AG04450 (cell line): ENCODE measurements at regions of chr15 and their contacts with region 1.

Region 1: GRCh38 chr15:69058830-69059556 is 44.5 kb downstream of the NOX5 start:
- DNase-seq: peak; percentile 73
- H3K4me3 ChIP-seq: no peak overlapping the region
- H3K27ac ChIP-seq: no peak overlapping the region
- H3K27me3 ChIP-seq: peaks cover 18% of the 10 kb centered on the region
- CTCF ChIP-seq: peak; percentile 82

Region 2: GRCh38 chr15:69225355-69226025 is 166.5 kb after region 1 on chr15:
- CTCF ChIA-PET with region 1: interaction called, 70 read pairs
- POLR2A ChIA-PET with region 1: no interaction called
- DNase-seq: no peak
- H3K4me3 ChIP-seq: no peak overlapping the region
- H3K27ac ChIP-seq: no peak overlapping the region
- H3K27me3 ChIP-seq: no peaks in the 10 kb centered on the region
- CTCF ChIP-seq: peak; percentile 48

Region 3: GRCh38 chr15:69319384-69320375 is 260.7 kb after region 1 on chr15:
- CTCF ChIA-PET with region 1: no interaction called
- POLR2A ChIA-PET with region 1: no interaction called
- DNase-seq: no peak
- H3K4me3 ChIP-seq: no peak overlapping the region
- H3K27ac ChIP-seq: peak overlapping the region; percentile 21
- H3K27me3 ChIP-seq: no peaks in the 10 kb centered on the region
- CTCF ChIP-seq: no peak

Region 4: DNA sequence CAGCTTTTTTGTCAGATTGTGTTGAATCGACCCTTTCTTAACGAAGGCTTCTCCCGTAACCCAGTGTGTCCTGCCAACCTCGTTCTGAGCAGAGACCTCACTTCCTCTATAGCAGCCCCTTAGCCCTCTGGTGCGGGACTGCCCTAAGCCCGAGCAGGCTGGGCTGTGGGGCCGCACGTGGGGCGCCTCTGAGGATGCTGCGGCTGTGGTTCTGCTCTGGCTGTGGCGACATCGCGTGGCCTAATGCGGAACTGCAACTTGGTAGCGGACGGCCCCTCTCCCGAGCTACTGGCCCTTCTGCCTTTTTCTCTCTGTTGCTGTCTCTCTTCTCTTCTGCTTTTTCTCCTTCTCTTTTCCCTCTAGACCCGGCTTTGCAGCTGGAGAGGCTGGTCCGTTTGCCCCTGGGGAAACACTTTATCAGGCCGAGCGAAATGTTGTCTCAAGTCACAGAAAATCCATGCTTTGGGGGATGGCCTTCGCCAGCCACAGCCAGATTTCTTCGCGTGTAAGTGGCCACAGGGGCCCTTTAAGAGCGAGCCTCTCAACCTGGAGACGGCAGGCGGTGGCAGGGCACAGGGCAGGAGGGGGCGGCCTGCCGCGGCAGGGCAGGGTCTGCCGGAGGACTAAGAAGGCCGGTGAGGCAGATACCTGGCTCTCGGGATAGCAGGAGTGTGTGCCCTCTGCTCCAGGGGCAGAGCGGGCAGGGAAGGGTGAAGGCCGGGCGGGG is 335.7 kb after region 1 on chr15:
- CTCF ChIA-PET with region 1: interaction called, 48 read pairs
- POLR2A ChIA-PET with region 1: no interaction called
- DNase-seq: no peak
- H3K4me3 ChIP-seq: no peak overlapping the region
- H3K27ac ChIP-seq: peak overlapping the region; percentile 11
- H3K27me3 ChIP-seq: no peaks in the 10 kb centered on the region
- CTCF ChIP-seq: peak; percentile 95

Region 5: DNA sequence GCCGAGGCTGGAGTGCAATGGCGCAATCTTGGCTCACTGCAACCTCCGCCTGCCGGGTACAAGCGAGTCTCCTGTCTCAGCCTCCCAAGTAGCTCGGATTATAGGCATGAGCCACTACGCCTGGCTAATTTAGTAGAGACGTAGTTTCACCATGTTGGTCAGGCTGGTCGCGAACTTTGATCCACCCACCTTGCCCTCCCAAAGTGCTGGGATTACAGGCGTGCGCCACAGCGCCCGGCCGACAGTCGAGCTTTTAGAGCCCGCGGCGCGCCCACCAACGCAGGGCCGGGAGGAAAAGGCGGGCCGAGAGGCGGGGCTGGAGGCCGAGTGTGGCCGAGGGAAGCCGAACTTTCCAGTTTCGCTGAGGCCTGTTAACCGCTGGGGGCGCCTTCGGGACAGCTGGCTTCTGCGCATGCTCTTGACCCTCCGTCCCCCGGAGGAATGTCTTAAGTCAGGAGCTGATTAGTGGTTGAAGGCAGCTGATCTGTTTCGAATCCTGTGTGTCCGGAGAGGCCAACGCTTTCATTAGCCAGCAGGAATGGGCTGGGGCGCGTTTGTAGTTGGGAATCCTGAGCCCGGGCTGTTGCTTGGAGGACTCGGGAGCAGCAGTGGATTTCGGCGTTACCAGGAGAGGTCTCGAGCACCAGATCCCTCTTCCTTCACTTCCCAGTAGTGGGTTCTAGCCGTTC is 403.6 kb after region 1 on chr15:
- CTCF ChIA-PET with region 1: interaction called, 11 read pairs
- POLR2A ChIA-PET with region 1: no interaction called
- DNase-seq: peak; percentile 98
- H3K4me3 ChIP-seq: peak overlapping the region; percentile 61
- H3K27ac ChIP-seq: peak overlapping the region; percentile 98
- H3K27me3 ChIP-seq: no peaks in the 10 kb centered on the region
- CTCF ChIP-seq: peak; percentile 89